ENCODE measurements at regions of chr1 and their contacts with region 1.

Region 1: GRCh38 chr1:94622757-94623156 is 81.2 kb upstream of the F3 start:
- DNase-seq: peak; percentile 95 to 99
- H3K4me3 ChIP-seq: peak overlapping the region; percentile 41; the same call in 1 of the 2 replicates
- H3K27ac ChIP-seq: peak overlapping the region; percentile 99
- H3K4me1 ChIP-seq: peaks cover 72% of the 10 kb centered on the region
- H3K27me3 ChIP-seq: no peaks in the 10 kb centered on the region
- CTCF ChIP-seq: no peak

Region 2: DNA sequence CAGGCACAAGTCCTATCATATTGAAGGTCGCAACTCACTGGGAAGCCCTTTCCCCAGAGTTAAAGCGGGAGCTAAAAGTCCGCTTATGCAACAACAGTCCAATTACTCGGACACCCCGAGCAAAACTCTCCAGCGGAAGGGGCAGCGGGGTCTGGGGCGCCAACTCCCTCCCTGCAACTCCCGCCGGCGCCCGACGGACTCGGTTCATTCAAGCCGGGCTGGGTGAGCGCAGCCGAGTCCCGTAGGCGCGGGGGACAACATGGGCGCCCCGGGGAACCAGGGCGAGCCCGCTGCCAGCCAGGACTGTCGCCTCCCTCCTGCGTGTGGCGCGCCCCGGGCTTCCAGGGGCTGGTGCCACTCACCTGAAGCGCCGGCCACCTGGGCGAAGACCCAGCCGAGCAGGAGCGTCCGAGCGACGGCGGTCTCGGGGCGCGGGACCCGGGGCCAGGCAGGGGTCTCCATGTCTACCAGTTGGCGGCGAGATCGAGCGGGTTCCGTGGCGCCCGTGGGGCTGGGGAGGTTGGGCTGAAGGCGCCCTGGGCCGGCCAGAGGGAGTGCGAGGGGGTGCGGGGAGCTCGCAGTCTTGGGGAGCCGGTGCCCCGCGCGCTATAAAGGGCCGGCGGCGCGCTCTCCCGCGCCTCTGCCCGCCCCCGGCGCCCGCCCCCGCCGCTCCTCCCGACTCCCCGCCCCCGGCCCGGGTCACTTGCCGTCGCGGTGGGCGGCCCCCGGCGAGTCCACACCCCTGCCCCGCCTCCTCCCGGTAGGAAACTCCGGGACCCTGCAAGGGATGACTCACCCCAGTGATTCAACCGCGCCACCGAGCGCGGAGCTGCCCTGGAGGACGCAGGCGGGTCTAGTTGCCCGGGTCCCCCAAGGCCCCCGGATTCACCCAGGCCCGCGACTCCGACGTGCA is 81.3 kb before region 1 on chr1 and contains the start of gene F3:
- CTCF ChIA-PET with region 1: interaction called, 4 read pairs
- POLR2A ChIA-PET with region 1: interaction called, 7 read pairs
- intact Hi-C with region 1: loop called (anchors 1 kb)
- DNase-seq: peak; percentile 93 to 98
- H3K4me3 ChIP-seq: peak within 1 kb of the TSS; percentile 80
- H3K27ac ChIP-seq: peak within 1 kb of the TSS; percentile 87
- H3K4me1 ChIP-seq: peaks cover 67% of the 10 kb centered on the region
- H3K27me3 ChIP-seq: no peaks in the 10 kb centered on the region
- CTCF ChIP-seq: no peak; the same call in 1 of the 2 replicates
- total RNA-seq, gene F3: 335 and 434 TPM in 2 replicates

Region 3: DNA sequence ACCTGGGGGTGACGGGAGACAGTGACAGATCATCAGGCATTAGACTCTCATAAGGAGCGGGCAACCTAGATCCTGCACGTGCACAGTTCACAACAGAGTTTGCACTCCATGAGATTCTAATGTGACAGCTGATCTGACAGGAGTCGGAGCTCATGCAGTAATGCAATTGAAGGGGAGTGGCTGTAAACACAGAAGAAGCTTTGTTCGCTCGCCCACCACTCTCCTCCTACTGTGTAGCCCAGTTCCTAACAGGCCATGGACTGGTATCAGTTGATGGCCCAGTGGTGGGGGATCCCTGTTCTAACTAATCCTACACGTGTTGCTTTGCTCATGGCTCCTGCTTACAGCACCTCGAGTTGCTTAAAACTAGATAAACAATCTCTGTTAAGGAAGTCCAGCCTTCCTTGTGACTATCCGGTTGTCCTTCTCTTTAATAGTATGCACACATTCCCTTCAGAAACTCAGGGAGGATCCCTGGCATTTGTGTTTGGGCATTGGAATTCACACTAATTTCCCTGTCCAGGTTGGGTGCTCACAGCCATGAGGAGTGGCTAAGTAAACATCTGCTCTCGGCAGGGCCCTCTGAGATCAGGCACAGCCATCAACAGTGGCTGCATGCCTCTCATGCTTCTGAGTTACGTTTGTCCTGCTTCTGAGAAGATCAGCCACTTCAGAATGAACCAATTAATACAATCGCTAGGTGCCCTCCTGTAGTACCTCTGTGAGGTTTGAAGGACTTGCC is 60.1 kb before region 1 on chr1:
- CTCF ChIA-PET with region 1: no interaction called
- POLR2A ChIA-PET with region 1: interaction called, 4 read pairs
- intact Hi-C with region 1: loop called (anchors 1 kb)
- DNase-seq: peak; percentile 75 to 94
- H3K4me3 ChIP-seq: no peak overlapping the region; the same call in 1 of the 2 replicates
- H3K27ac ChIP-seq: peak overlapping the region; percentile 65
- H3K4me1 ChIP-seq: peaks cover 39% of the 10 kb centered on the region
- H3K27me3 ChIP-seq: no peaks in the 10 kb centered on the region
- CTCF ChIP-seq: no peak

Region 4: DNA sequence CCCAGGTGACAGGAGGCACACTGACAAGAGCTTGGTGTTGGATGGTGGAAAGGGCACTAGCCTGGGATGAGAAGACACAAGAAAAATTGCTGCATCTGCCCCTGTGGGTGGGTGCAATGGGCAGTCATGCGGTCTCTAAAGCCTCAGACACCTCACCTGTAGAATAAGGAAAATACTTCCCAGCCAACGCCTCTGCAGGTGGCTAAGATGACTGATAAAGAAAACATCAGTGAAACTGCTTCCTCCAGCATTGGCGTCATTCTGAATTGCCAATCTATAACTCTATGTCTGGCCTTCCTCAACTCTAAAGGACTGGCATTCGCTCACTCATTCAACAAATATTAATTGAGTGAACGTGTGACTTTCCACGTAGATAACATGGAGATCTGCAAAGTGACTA is 19.2 kb after region 1 on chr1:
- CTCF ChIA-PET with region 1: no interaction called
- POLR2A ChIA-PET with region 1: interaction called, 9 read pairs
- intact Hi-C with region 1: loop called (anchors 1 kb)
- DNase-seq: peak; percentile 78 to 100
- H3K4me3 ChIP-seq: peak overlapping the region; percentile 18; the same call in 1 of the 2 replicates
- H3K27ac ChIP-seq: peak overlapping the region; percentile 97
- H3K4me1 ChIP-seq: peaks cover 85% of the 10 kb centered on the region
- H3K27me3 ChIP-seq: no peaks in the 10 kb centered on the region
- CTCF ChIP-seq: no peak

Region 5: GRCh38 chr1:94713472-94714141 is 90.8 kb after region 1 on chr1:
- CTCF ChIA-PET with region 1: no interaction called
- POLR2A ChIA-PET with region 1: interaction called, 3 read pairs
- intact Hi-C with region 1: loop called (anchors 1 kb)
- DNase-seq: peak; percentile 86 to 99
- H3K4me3 ChIP-seq: 0 out of 2 replicates have a peak overlapping the region, but pooled peaks have one; percentile 9
- H3K27ac ChIP-seq: peak overlapping the region; percentile 79
- H3K4me1 ChIP-seq: peaks cover 23% of the 10 kb centered on the region
- H3K27me3 ChIP-seq: no peaks in the 10 kb centered on the region
- CTCF ChIP-seq: no peak

Region 6: DNA sequence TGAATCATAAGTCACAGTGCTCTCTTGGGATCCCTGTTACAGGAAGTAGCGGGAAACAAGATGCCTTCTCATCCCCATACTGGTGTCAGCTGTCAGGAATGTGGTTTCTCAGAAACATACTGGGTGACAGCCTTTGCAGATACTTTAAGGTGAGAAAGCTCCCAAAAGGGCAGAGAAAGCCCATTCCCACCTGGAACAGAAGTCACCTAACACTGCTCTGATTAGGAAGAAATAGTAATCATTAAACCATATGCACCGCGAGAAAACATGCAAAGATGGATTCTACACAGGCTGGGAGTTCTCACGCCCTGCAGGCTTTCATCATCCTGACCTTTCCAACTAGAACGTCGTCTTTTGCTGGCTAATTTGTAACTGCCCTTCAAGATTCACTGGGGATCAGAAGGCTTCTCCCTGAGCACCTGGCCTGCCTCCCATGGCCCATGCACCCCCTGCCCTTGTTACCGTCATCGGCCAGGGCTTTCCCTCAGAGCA is 151.2 kb after region 1 on chr1:
- CTCF ChIA-PET with region 1: no interaction called
- POLR2A ChIA-PET with region 1: no interaction called
- intact Hi-C with region 1: loop called (anchors 2 kb)
- DNase-seq: peak; percentile 48 to 92
- H3K4me3 ChIP-seq: no peak overlapping the region
- H3K27ac ChIP-seq: peak overlapping the region; percentile 85
- H3K4me1 ChIP-seq: peaks cover 69% of the 10 kb centered on the region
- H3K27me3 ChIP-seq: no peaks in the 10 kb centered on the region
- CTCF ChIP-seq: no peak